CD4-positive, alpha-beta memory T cell (primary cell): ENCODE measurements at regions of chr3 and their contacts with region 1.

Region 1: DNA sequence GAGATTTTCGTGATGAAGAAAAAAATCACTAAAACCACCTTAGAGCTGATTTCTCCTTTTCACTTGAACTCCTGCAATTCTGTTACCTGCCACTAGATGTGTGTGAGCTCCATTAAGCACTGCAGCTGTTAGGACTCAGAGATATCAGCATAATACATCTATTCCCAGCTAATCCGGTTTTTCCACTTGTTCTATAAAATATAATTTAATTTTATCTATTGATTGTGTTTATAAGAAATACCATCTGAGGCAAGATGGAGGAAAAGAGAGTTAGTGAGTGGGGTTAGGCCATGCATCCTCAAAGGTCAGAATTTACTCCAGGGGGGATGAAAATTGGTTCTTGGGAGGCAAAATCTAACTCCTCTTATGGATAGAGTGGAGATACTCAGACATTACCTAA is 152.7 kb downstream of the IL20RB start:
- DNase-seq: no peak
- H3K4me3 ChIP-seq: no peak overlapping the region
- H3K4me3 Mint-ChIP-seq: no peak overlapping the region
- H3K27ac ChIP-seq: no peak overlapping the region
- H3K27ac Mint-ChIP-seq: no peak overlapping the region
- H3K4me1 ChIP-seq: no peaks in the 10 kb centered on the region
- H3K4me1 Mint-ChIP-seq: no peaks in the 10 kb centered on the region
- H3K27me3 ChIP-seq: no peaks in the 10 kb centered on the region
- H3K27me3 Mint-ChIP-seq: peaks cover 15 to 18% of the 10 kb centered on the region in 2 donors

Region 2: GRCh38 chr3:137081711-137082110 is 28.8 kb before region 1 on chr3:
- CTCF ChIA-PET with region 1: no interaction called
- POLR2A ChIA-PET with region 1: no interaction called
- intact Hi-C with region 1: no loop called
- DNase-seq: no peak
- H3K4me3 ChIP-seq: no peak overlapping the region
- H3K4me3 Mint-ChIP-seq: no peak overlapping the region
- H3K27ac ChIP-seq: no peak overlapping the region
- H3K27ac Mint-ChIP-seq: no peak overlapping the region
- H3K4me1 ChIP-seq: no peaks in the 10 kb centered on the region
- H3K4me1 Mint-ChIP-seq: no peaks in the 10 kb centered on the region
- H3K27me3 ChIP-seq: peaks cover 6% of the 10 kb centered on the region
- H3K27me3 Mint-ChIP-seq: peaks cover 20 to 32% of the 10 kb centered on the region in 2 donors

Region 3: DNA sequence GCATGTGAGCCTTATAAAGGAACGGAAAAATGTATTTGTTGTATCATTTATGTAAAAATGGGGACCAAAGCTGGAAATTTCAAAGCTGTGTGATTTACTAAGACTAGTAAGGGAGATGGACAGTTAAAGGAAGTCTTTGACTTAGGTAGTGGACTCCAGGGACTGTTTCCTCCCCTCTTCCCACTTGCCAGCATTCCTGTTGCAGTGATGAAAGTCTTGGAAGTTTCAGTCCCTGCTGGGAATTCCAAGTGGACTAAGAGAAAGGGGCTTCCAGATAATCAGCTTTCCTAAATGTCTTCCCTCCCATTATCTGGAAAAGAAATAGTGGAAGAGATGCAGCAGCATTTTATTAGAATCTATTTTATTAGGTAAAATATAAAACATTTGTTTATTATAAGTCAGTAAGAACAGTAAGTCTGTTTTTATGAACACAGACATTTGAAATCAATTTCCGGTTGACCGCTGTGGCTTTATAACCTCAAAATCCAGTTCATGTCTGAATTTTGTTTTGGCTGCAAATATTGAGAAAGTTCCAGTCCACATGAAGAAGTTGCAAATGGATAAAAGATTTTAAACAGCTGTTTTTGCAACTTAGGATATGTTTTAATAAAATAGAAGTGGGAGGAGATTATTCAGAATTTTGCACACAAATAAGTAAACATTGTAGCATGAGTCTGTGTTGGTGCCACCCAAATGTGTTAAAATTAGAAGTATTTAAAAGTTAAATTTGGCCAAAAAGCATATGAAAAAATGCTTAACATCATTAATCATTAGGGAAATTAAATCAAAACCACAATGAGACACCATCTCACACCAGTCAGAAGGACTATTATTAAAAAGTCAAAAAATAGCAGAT is 10.9 kb before region 1 on chr3:
- CTCF ChIA-PET with region 1: interaction called, 26 read pairs
- POLR2A ChIA-PET with region 1: no interaction called
- intact Hi-C with region 1: no loop called
- DNase-seq: no peak
- H3K4me3 ChIP-seq: no peak overlapping the region
- H3K4me3 Mint-ChIP-seq: no peak overlapping the region
- H3K27ac ChIP-seq: no peak overlapping the region
- H3K27ac Mint-ChIP-seq: no peak overlapping the region
- H3K4me1 ChIP-seq: no peaks in the 10 kb centered on the region
- H3K4me1 Mint-ChIP-seq: no peaks in the 10 kb centered on the region
- H3K27me3 ChIP-seq: no peaks in the 10 kb centered on the region
- H3K27me3 Mint-ChIP-seq: peaks cover 8 to 13% of the 10 kb centered on the region in 2 donors

Region 4: DNA sequence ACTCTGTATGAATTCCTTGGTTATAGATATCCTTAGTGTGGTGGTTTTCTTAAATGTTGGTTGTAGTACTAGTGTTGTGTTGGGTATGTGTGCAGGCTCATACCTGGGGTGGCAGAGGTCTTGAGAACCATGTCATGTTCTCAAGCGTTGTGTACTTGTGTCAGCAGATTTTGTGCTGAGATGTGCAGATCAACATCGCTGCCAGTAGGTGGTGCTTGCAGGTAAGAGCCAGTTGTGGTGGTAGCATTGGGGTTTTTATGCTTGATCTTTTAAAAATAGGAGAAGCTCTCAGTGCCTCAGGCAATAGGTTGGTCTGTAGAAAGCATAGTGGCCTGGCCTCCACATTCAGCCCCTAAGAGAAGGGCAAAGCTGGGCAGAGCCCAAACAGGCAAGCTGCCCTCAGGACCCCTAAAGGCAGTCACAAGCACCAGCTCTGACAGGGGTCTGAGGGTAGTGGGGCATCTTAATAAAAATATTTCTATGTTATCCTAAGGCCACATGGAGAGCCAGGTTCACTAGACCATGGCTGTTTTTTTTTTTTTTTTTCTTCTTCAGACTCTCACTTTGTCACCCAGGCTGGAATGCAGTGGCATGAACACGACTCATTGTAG is 11.3 kb after region 1 on chr3:
- CTCF ChIA-PET with region 1: interaction called, 35 read pairs
- POLR2A ChIA-PET with region 1: no interaction called
- intact Hi-C with region 1: no loop called
- DNase-seq: no peak
- H3K4me3 ChIP-seq: no peak overlapping the region
- H3K4me3 Mint-ChIP-seq: no peak overlapping the region
- H3K27ac ChIP-seq: no peak overlapping the region
- H3K27ac Mint-ChIP-seq: no peak overlapping the region
- H3K4me1 ChIP-seq: no peaks in the 10 kb centered on the region
- H3K4me1 Mint-ChIP-seq: no peaks in the 10 kb centered on the region
- H3K27me3 ChIP-seq: no peaks in the 10 kb centered on the region
- H3K27me3 Mint-ChIP-seq: peaks cover 5 to 13% of the 10 kb centered on the region in 2 donors